ENCODE measurements at regions of chr3 and their contacts with region 1.

Region 1: GRCh38 chr3:113736548-113737089 is 9.4 kb downstream of the NAA50 start:
- DNase-seq: peak in 7 of 9 donors; percentile 49 to 71 (median 67)
- ATAC-seq: peak; percentile 93
- H3K4me3 ChIP-seq: no peak overlapping the region
- H3K4me3 Mint-ChIP-seq: no peak overlapping the region
- H3K27ac ChIP-seq: peak overlapping the region; percentile 17
- H3K27ac Mint-ChIP-seq: peak overlapping the region; percentile 18 to 85 (median 60)
- H3K4me1 ChIP-seq: peaks cover 6 to 23% of the 10 kb centered on the region in 2 donors
- H3K4me1 Mint-ChIP-seq: peaks cover 13 to 70% (median 56%) of the 10 kb centered on the region in 7 donors
- H3K27me3 ChIP-seq: no peaks in the 10 kb centered on the region
- H3K27me3 Mint-ChIP-seq: no peaks in the 10 kb centered on the region

Region 2: GRCh38 chr3:113575206-113575605 is 161.4 kb before region 1 on chr3:
- CTCF ChIA-PET with region 1: no interaction called
- POLR2A ChIA-PET with region 1: no interaction called
- intact Hi-C with region 1: loop called in 1 of 2 experiments (anchors 2 kb)
- DNase-seq: no peak
- ATAC-seq: no peak
- H3K4me3 ChIP-seq: no peak overlapping the region
- H3K4me3 Mint-ChIP-seq: no peak overlapping the region
- H3K27ac ChIP-seq: no peak overlapping the region
- H3K27ac Mint-ChIP-seq: peak overlapping the region in 8 of 9 donors; percentile 10 to 79 (median 66)
- H3K4me1 ChIP-seq: no peaks in the 10 kb centered on the region
- H3K4me1 Mint-ChIP-seq: peaks cover 3 to 21% (median 13%) of the 10 kb centered on the region in 7 donors
- H3K27me3 ChIP-seq: no peaks in the 10 kb centered on the region
- H3K27me3 Mint-ChIP-seq: no peaks in the 10 kb centered on the region

Region 3: GRCh38 chr3:113684271-113684819 is 52.3 kb before region 1 on chr3:
- CTCF ChIA-PET with region 1: no interaction called
- POLR2A ChIA-PET with region 1: no interaction called
- intact Hi-C with region 1: no loop called
- DNase-seq: no peak
- ATAC-seq: no peak
- H3K4me3 ChIP-seq: no peak overlapping the region
- H3K4me3 Mint-ChIP-seq: peak overlapping the region in 1 of 10 donors; percentile 26
- H3K27ac ChIP-seq: no peak overlapping the region
- H3K27ac Mint-ChIP-seq: no peak overlapping the region
- H3K4me1 ChIP-seq: no peaks in the 10 kb centered on the region
- H3K4me1 Mint-ChIP-seq: peaks cover 0 to 37% (median 16%) of the 10 kb centered on the region in 7 donors
- H3K27me3 ChIP-seq: no peaks in the 10 kb centered on the region
- H3K27me3 Mint-ChIP-seq: no peaks in the 10 kb centered on the region

Region 4: GRCh38 chr3:113795693-113796092 is 59.1 kb after region 1 on chr3:
- CTCF ChIA-PET with region 1: interaction called, 4 read pairs
- POLR2A ChIA-PET with region 1: no interaction called
- intact Hi-C with region 1: loop called in 1 of 2 experiments (anchors 1 kb)
- DNase-seq: no peak
- ATAC-seq: no peak
- H3K4me3 ChIP-seq: no peak overlapping the region
- H3K4me3 Mint-ChIP-seq: no peak overlapping the region
- H3K27ac ChIP-seq: no peak overlapping the region
- H3K27ac Mint-ChIP-seq: peak overlapping the region in 1 of 9 donors; percentile 19
- H3K4me1 ChIP-seq: no peaks in the 10 kb centered on the region
- H3K4me1 Mint-ChIP-seq: no peaks in the 10 kb centered on the region
- H3K27me3 ChIP-seq: no peaks in the 10 kb centered on the region
- H3K27me3 Mint-ChIP-seq: no peaks in the 10 kb centered on the region

Region 5: DNA sequence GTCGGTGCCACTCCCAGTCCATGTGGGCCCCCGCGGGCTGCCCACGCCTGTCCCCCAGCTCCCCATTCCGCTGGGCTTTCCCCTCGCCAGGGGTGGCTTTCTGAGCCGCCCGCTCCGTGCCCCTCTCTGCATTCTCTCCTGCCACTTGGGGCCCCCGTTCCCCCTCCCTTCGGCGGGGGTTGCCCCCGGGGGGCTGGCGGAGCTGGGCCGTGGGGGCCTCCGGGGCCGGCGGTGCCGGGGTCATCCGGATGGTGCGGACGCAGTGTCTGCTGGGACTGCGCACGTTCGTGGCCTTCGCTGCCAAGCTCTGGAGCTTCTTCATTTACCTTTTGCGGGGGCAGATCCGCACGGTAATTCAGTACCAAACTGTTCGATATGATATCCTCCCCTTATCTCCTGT is 148.4 kb after region 1 on chr3:
- CTCF ChIA-PET with region 1: no interaction called
- POLR2A ChIA-PET with region 1: no interaction called
- intact Hi-C with region 1: no loop called
- DNase-seq: no peak
- ATAC-seq: no peak
- H3K4me3 ChIP-seq: no peak overlapping the region
- H3K4me3 Mint-ChIP-seq: no peak overlapping the region
- H3K27ac ChIP-seq: no peak overlapping the region
- H3K27ac Mint-ChIP-seq: no peak overlapping the region
- H3K4me1 ChIP-seq: no peaks in the 10 kb centered on the region
- H3K4me1 Mint-ChIP-seq: no peaks in the 10 kb centered on the region
- H3K27me3 ChIP-seq: no peaks in the 10 kb centered on the region
- H3K27me3 Mint-ChIP-seq: peaks cover 0 to 4% (median 0%) of the 10 kb centered on the region in 5 donors

Region 6: DNA sequence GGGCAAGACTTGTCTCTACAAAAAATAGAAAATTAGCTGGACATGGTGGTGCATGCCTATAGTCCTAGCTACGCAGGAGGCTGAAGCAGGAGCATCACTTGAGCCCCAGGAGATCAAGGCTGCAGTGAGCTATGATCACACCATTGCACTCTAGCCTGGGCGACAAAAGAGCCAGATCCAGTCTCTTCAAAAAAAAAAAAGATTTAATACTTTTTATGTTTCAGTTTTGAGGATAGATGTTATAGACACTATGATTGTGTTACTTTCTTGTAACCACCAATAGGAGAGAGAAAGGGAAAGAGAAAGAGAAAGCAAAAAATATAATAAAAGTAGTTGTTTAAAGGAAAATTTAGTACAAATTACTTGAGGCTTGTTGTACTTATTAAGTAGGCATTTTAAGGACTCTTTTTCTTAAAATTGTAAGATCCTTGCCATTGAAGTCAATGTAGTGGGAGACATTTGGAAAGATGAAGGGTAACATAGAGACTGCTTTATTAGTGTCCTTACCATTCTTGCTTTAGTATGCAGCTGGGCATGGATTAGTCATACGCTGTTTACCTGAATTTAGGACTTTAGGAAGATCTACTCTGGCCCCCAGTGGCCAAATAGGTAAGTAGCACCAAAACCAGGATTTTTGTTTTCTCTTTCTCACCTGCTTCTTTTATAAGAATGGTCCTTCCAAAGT is 176.1 kb after region 1 on chr3:
- CTCF ChIA-PET with region 1: interaction called, 17 read pairs
- POLR2A ChIA-PET with region 1: no interaction called
- intact Hi-C with region 1: loop called (anchors 1 kb)
- DNase-seq: peak in 7 of 9 donors; percentile 18 to 50 (median 36)
- ATAC-seq: peak; percentile 91
- H3K4me3 ChIP-seq: no peak overlapping the region
- H3K4me3 Mint-ChIP-seq: peak overlapping the region in 8 of 10 donors; percentile 29 to 75 (median 64)
- H3K27ac ChIP-seq: no peak overlapping the region
- H3K27ac Mint-ChIP-seq: peak overlapping the region in 6 of 9 donors; percentile 5 to 76 (median 58)
- H3K4me1 ChIP-seq: no peaks in the 10 kb centered on the region
- H3K4me1 Mint-ChIP-seq: peaks cover 0 to 7% (median 5%) of the 10 kb centered on the region in 7 donors
- H3K27me3 ChIP-seq: no peaks in the 10 kb centered on the region
- H3K27me3 Mint-ChIP-seq: peaks cover 0 to 15% (median 0%) of the 10 kb centered on the region in 5 donors

Region 7: GRCh38 chr3:114152519-114153151 is 416.0 kb after region 1 on chr3:
- CTCF ChIA-PET with region 1: interaction called, 3 read pairs
- POLR2A ChIA-PET with region 1: no interaction called
- intact Hi-C with region 1: loop called (anchors 1 to 5 kb)
- DNase-seq: peak; percentile 61 to 83 (median 78)
- ATAC-seq: peak; percentile 97
- H3K4me3 ChIP-seq: peak overlapping the region; percentile 55
- H3K4me3 Mint-ChIP-seq: peak overlapping the region; percentile 37 to 73 (median 62)
- H3K27ac ChIP-seq: no peak overlapping the region
- H3K27ac Mint-ChIP-seq: peak overlapping the region in 2 of 9 donors; percentile 14 to 40
- H3K4me1 ChIP-seq: peaks cover 8 to 9% of the 10 kb centered on the region in 2 donors
- H3K4me1 Mint-ChIP-seq: peaks cover 0 to 12% (median 0%) of the 10 kb centered on the region in 7 donors
- H3K27me3 ChIP-seq: no peaks in the 10 kb centered on the region
- H3K27me3 Mint-ChIP-seq: no peaks in the 10 kb centered on the region

Region 8: DNA sequence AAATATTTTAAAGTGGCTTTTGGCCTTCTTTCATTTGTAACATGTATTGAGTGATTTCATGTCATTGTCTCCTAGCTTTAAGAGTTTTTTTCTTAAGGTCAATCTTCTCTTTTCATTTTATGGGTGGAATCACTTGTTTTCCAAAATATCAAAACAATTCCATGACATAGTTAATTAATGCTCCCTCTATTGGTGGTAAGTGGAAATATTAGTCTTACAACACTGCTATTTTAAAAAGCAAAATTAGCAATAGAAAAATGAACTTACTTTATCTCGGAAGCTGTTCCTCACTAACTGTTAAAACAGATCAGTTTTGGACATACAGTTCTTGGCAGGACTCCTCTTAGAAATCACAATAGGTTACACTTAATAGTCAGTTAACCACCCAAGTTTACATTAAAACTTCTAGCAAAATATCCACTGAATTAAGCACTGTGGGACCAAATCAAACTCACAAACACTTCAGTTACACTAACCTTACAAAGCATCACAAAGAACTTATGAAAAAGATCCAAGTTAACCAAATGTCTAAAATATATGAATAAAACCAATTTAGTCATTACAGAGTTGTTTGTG is 599.6 kb after region 1 on chr3:
- CTCF ChIA-PET with region 1: no interaction called
- POLR2A ChIA-PET with region 1: no interaction called
- intact Hi-C with region 1: loop called in 1 of 2 experiments (anchors 1 kb)
- DNase-seq: peak in 2 of 9 donors; percentile 2 to 4
- ATAC-seq: no peak
- H3K4me3 ChIP-seq: no peak overlapping the region
- H3K4me3 Mint-ChIP-seq: no peak overlapping the region
- H3K27ac ChIP-seq: no peak overlapping the region
- H3K27ac Mint-ChIP-seq: peak overlapping the region in 1 of 9 donors; percentile 9
- H3K4me1 ChIP-seq: peaks cover 0 to 38% of the 10 kb centered on the region in 2 donors
- H3K4me1 Mint-ChIP-seq: peaks cover 0 to 25% (median 4%) of the 10 kb centered on the region in 7 donors
- H3K27me3 ChIP-seq: no peaks in the 10 kb centered on the region
- H3K27me3 Mint-ChIP-seq: no peaks in the 10 kb centered on the region

Measured in naive thymus-derived CD4-positive, alpha-beta T cell (primary cell).